ENCODE measurements at regions of chr16 and their contacts with region 1.

Region 1: GRCh38 chr16:12257926-12258561 is 281.5 kb downstream of the SNX29 start:
- DNase-seq: no peak
- H3K4me3 ChIP-seq: no peak overlapping the region
- H3K27ac ChIP-seq: no peak overlapping the region
- H3K4me1 ChIP-seq: peaks cover 16% of the 10 kb centered on the region
- H3K27me3 ChIP-seq: no peaks in the 10 kb centered on the region
- CTCF ChIP-seq: no peak
- EP300 ChIP-seq: no peak
- POLR2A ChIP-seq: no peak

Region 2: DNA sequence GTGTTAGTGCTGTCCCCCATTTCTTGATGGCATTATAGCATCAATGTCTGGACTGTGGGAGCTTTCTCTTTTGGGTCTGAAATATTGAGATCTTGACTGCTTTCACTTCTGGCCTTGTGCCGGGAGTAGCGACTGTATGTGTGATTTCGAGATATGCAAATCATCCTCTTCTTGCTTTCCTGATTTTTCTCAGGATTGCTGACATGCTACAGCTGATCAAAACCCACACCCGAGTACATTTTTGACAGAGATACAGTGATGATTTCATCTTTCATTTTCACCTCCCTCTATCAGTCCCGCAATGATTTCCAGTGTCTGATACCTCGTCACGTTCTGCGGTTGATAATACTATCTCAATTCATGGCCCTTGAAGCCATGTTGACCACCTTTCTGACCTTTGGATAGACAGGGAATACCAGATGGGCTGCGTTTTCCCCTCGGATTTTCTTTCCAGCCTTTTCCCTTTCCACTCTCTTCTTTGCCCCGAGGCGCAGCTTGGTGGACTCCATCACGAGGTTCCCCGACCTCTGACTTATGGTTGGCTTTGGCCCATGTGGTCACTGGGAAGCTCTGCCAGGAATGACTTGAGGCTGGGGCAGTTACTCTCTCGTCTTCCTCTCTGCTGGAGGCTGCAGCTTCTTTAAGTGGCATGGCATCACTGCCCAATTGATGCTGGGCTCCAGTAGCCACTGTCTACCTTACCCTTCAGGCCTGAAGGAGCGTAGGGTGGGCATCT is 97.1 kb before region 1 on chr16:
- intact Hi-C with region 1: loop called in 1 of 4 experiments (anchors 10 kb)
- DNase-seq: peak in 1 of 5 donors; percentile 33
- H3K4me3 ChIP-seq: no peak overlapping the region
- H3K27ac ChIP-seq: no peak overlapping the region
- H3K4me1 ChIP-seq: peaks cover 31% of the 10 kb centered on the region
- H3K27me3 ChIP-seq: no peaks in the 10 kb centered on the region
- CTCF ChIP-seq: no peak
- EP300 ChIP-seq: no peak
- POLR2A ChIP-seq: no peak

Region 3: GRCh38 chr16:12238598-12238997 is 19.4 kb before region 1 on chr16:
- intact Hi-C with region 1: loop called in 1 of 4 experiments (anchors 1 kb)
- DNase-seq: no peak
- H3K4me3 ChIP-seq: no peak overlapping the region
- H3K27ac ChIP-seq: no peak overlapping the region
- H3K4me1 ChIP-seq: peaks cover 4% of the 10 kb centered on the region
- H3K27me3 ChIP-seq: no peaks in the 10 kb centered on the region
- CTCF ChIP-seq: no peak
- EP300 ChIP-seq: no peak
- POLR2A ChIP-seq: no peak